ENCODE measurements at regions of chr4 and their contacts with region 1.

Region 1: GRCh38 chr4:15649914-15650545 is 5.1 kb downstream of the FBXL5 start:
- DNase-seq: peak; percentile 33 to 65
- ATAC-seq: peak; percentile 58 to 72; a peak in 3 of 6 replicates
- H3K4me3 ChIP-seq: no peak overlapping the region
- H3K27ac ChIP-seq: peak overlapping the region in 1 of 2 experiments; percentile 50; a peak in 1 of 6 replicates
- H3K4me1 ChIP-seq: peaks cover 29% of the 10 kb centered on the region; the same call in 2 of the 3 replicates
- CTCF ChIP-seq: peak; percentile 69
- EP300 ChIP-seq: no peak
- POLR2A ChIP-seq: no peak
- RAD21 ChIP-seq: peak; percentile 64 to 66

Region 2: DNA sequence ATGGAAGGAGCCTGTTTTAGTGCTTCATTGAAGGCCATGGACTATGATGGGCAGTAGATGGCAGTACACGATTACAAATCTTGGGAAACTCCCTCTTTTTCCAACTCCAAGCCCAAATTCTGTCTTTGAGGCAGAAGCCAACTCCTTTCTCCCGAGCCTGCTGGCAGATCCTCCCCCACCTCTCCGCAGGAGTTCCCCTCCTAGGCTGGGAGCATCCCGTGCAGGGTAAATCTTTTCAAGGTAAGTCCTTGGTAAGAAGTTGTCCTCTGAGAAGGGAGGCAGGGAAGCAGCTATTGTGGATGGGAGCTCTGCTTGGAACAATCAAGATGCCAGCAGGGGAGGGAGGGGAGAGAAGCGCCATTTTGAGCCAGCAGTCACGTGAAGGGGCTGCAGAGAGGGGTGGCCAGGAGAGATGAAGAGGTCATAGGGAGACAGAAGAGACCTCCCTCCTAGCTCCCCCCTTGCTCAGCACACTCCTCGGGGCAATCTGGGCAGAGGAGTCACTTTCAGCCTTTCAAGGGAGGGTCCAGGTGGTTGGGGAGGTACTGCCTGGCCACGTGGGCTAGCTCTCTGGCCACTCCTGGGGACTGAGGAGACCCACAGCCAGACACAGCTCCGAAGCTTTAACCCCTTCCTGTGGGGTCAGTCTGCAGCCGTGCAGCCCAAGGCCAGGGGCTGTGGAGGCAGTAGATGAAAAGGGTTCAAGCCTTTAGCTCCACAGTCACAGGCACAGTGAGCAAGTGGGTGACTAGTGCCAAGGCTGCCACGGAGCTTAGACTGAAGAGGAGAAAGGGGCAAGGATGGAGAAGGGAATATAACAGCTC is 170.7 kb before region 1 on chr4:
- CTCF ChIA-PET with region 1: interaction called, 16 read pairs
- POLR2A ChIA-PET with region 1: interaction called, 5 read pairs
- DNase-seq: peak; percentile 58 to 84
- ATAC-seq: peak; percentile 94 to 96
- H3K4me3 ChIP-seq: peak overlapping the region; percentile 54
- H3K27ac ChIP-seq: peak overlapping the region; percentile 92 to 95
- H3K4me1 ChIP-seq: peaks cover 10% of the 10 kb centered on the region
- CTCF ChIP-seq: peak; percentile 68
- EP300 ChIP-seq: no peak
- POLR2A ChIP-seq: no peak; the same call in 1 of the 2 replicates
- RAD21 ChIP-seq: peak; percentile 76 to 81

Measured in A549 (cell line).